Caco-2 (cell line): ENCODE measurements at regions of chr1 and their contacts with region 1.

Region 1: GRCh38 chr1:239386453-239387303 is at the start of gene CHRM3:
- DNase-seq: peak; percentile 77 to 78
- H3K4me3 ChIP-seq: peak within 1 kb of the TSS; percentile 45
- H3K4me3 Mint-ChIP-seq: peak within 1 kb of the TSS; percentile 79
- H3K27ac Mint-ChIP-seq: peak within 1 kb of the TSS; percentile 46
- H3K4me1 ChIP-seq: peaks cover 7% of the 10 kb centered on the region; the same call in 1 of the 2 replicates
- H3K4me1 Mint-ChIP-seq: peaks cover 9% of the 10 kb centered on the region
- H3K27me3 ChIP-seq: no peaks in the 10 kb centered on the region
- H3K27me3 Mint-ChIP-seq: peaks cover 12% of the 10 kb centered on the region
- CTCF ChIP-seq: peak in 1 of 2 experiments; percentile 27
- total RNA-seq, gene CHRM3: 6.8 and 8.6 TPM in 2 replicates

Region 2: DNA sequence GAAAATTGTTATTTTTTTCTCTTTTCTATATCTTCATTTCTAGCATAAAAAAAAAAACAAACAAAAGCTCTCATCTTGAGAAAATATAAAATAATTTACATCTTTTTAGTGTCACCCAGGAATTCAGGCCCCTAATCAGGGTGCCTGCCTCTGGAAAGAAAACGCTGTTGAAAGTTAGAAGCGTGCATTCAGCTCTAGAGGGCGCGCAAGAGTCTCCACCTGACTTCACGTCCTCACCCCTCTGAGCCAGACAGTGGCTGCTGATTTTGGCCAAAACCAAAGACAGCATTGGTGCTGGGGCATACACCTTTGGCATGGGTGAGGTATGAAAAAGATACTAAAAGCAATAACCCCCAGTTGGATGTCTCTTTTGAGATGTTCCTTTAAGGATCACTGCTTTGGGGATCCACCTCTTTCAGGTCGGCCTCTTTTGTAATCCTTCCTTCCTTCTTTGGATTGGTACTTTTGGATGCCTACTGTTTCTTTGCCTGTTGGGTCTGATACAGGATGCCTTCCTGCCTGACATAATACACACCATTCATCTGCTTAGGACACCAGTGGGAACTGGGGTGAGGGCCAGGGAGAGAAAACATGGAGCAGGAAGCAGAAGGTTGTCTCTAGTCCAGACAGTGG is 77.9 kb before region 1 on chr1:
- CTCF ChIA-PET with region 1: no interaction called
- POLR2A ChIA-PET with region 1: no interaction called
- intact Hi-C with region 1: loop called (anchors 1 kb)
- DNase-seq: peak in 1 of 2 experiments; percentile 43
- H3K4me3 ChIP-seq: no peak overlapping the region
- H3K4me3 Mint-ChIP-seq: no peak overlapping the region
- H3K27ac Mint-ChIP-seq: no peak overlapping the region
- H3K4me1 ChIP-seq: no peaks in the 10 kb centered on the region
- H3K4me1 Mint-ChIP-seq: no peaks in the 10 kb centered on the region
- H3K27me3 ChIP-seq: no peaks in the 10 kb centered on the region
- H3K27me3 Mint-ChIP-seq: no peaks in the 10 kb centered on the region
- CTCF ChIP-seq: peak; percentile 52 to 55

Region 3: DNA sequence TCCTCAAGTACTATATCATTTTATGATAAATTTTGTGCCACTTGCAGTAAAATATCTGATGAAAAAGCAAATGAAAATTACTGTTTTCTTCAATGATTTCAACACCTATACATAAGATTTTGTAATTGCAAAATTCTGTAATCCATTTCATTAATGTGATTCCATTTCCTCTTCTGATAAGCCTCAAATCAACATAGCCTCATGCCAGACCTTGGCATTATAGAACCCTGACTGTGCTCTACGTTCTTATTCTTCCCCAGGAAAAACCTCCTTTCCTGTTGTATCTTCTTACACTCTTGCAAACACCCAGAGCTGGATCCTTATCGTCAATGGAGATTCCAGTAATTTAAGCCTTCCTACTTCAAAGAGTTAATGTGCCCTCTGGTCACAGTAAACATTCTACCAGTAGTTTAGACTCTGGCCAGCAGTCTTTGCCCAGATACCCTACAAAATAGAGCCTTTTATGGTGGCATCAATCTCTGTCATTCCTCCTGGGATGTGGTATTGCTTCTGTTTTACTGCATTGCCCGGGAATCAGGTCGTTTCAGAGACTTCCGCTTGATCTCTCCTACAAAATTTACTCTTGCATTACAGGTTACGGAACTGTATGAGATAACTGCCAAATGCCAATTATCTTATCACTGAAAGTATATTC is 48.8 kb before region 1 on chr1:
- CTCF ChIA-PET with region 1: no interaction called
- POLR2A ChIA-PET with region 1: no interaction called
- intact Hi-C with region 1: no loop called
- DNase-seq: no peak
- H3K4me3 ChIP-seq: no peak overlapping the region
- H3K4me3 Mint-ChIP-seq: no peak overlapping the region
- H3K27ac Mint-ChIP-seq: no peak overlapping the region
- H3K4me1 ChIP-seq: no peaks in the 10 kb centered on the region
- H3K4me1 Mint-ChIP-seq: no peaks in the 10 kb centered on the region
- H3K27me3 ChIP-seq: no peaks in the 10 kb centered on the region
- H3K27me3 Mint-ChIP-seq: no peaks in the 10 kb centered on the region
- CTCF ChIP-seq: no peak

Region 4: DNA sequence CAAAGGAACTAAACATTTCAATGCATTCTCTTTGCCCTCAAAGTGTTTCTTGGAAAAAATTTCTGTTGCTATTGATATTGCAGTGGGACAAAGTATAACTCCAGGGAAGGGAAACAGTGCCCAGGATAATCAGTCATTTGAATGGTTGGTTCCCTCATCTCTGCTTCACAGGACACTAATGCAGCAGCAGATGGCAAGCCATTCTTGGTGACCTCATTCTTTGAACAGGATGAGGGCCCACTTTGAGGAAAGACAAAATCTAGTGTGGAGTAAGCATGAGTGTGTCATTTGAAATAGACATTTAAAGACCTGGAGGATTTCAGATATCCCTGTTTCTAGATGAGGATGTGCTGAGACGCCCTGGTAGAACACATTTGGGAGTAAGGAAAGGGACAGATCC is 32.0 kb after region 1 on chr1:
- CTCF ChIA-PET with region 1: no interaction called
- POLR2A ChIA-PET with region 1: no interaction called
- intact Hi-C with region 1: no loop called
- DNase-seq: no peak
- H3K4me3 ChIP-seq: no peak overlapping the region
- H3K4me3 Mint-ChIP-seq: no peak overlapping the region
- H3K27ac Mint-ChIP-seq: no peak overlapping the region
- H3K4me1 ChIP-seq: no peaks in the 10 kb centered on the region
- H3K4me1 Mint-ChIP-seq: no peaks in the 10 kb centered on the region
- H3K27me3 ChIP-seq: no peaks in the 10 kb centered on the region
- H3K27me3 Mint-ChIP-seq: no peaks in the 10 kb centered on the region
- CTCF ChIP-seq: no peak